ENCODE measurements at regions of chr15 and their contacts with region 1.

Region 1: DNA sequence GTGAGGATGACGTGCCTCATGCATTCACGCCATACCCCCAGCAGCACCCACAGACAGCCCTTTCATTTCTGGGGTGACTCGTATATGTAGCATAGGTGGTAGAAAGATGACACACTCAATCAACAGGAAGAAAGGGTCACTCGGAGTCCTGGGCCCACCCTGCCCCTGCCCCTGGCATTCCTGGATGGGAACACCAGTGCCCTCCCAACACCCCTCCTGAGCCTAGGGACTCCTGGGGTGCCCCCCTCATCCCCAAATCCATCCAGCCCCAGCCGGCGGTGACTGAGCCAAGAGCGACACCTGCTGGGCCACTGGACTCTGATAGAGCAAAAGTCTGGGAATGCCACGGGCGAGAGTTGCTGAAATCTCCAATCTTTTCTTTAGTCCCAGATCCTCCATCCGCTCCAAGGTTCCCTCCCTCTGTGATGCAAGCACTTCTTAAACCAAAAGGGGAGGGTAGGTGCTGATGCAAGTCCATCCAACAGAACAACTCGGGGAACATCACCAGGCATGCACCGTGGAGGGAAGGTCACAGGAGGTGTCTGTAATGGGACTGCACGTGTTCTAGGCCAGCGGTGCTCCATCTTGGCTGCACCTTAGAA is 31.1 kb downstream of the ACAN start:
- DNase-seq: peak in 9 of 10 donors; percentile 46 to 94 (median 74)

Region 2: DNA sequence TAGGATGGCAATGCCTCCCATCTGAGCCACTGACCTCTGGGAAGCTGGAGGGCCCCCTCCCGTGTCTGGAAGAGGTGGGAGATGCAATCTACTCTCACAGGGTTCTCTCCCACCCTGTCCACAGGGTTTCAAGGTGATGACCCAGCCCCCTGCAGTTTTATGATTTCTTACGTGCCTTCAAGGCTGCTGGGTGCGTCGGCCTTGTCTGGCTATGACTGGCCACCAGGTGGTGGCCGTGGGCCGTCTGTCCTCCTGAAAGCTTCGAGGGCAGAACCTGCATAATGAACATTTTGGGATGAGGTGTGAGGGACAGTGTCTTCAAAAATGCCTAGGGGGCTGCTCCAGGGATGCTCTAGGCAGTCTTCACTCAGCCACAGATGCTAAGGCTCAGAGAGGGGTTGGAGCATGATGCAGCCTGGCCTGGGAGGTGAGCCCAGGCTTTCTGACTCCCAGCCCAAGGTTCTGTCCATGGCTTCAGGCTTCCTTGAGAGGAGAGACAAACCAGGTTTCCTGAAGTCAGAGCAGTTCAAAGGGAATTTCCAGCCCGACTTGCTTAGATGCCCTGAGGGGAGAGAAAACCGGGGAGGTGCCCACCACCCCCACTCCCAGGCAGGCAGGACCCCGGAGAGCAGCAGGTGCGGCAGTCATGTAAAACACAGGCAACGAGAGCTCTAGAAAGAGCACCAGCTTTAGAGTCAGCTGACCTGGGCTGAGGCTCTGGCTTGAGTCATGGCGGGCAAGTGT is 176.8 kb before region 1 on chr15:
- intact Hi-C with region 1: loop called (anchors 1 kb)
- DNase-seq: peak in 7 of 10 donors; percentile 41 to 94 (median 63)

Region 3: GRCh38 chr15:89087830-89088604 is 253.7 kb after region 1 on chr15 and contains the start of gene ABHD2:
- intact Hi-C with region 1: no loop called
- DNase-seq: peak; percentile 99 to 100 (median 100)

Region 4: GRCh38 chr15:89647191-89647851 is 813.0 kb after region 1 on chr15:
- intact Hi-C with region 1: no loop called
- DNase-seq: peak in 6 of 10 donors; percentile 52 to 93 (median 62)